ENCODE measurements at regions of chr11 and their contacts with region 1.

Region 1: GRCh38 chr11:85076373-85077330 is 550.5 kb downstream of the DLG2 start:
- DNase-seq: no peak
- H3K4me3 ChIP-seq: no peak overlapping the region
- H3K4me3 Mint-ChIP-seq: no peak overlapping the region
- H3K27ac Mint-ChIP-seq: no peak overlapping the region
- H3K4me1 ChIP-seq: peaks cover 8% of the 10 kb centered on the region; the same call in 1 of the 2 replicates
- H3K4me1 Mint-ChIP-seq: peaks cover 20% of the 10 kb centered on the region
- H3K27me3 ChIP-seq: no peaks in the 10 kb centered on the region
- H3K27me3 Mint-ChIP-seq: no peaks in the 10 kb centered on the region
- CTCF ChIP-seq: no peak

Region 2: GRCh38 chr11:85029911-85030332 is 46.7 kb before region 1 on chr11:
- CTCF ChIA-PET with region 1: no interaction called
- POLR2A ChIA-PET with region 1: no interaction called
- intact Hi-C with region 1: no loop called
- DNase-seq: no peak
- H3K4me3 ChIP-seq: no peak overlapping the region
- H3K4me3 Mint-ChIP-seq: no peak overlapping the region
- H3K27ac Mint-ChIP-seq: no peak overlapping the region
- H3K4me1 ChIP-seq: no peaks in the 10 kb centered on the region
- H3K4me1 Mint-ChIP-seq: no peaks in the 10 kb centered on the region
- H3K27me3 ChIP-seq: no peaks in the 10 kb centered on the region
- H3K27me3 Mint-ChIP-seq: no peaks in the 10 kb centered on the region
- CTCF ChIP-seq: no peak

Region 3: GRCh38 chr11:85098996-85099395 is 22.3 kb after region 1 on chr11:
- CTCF ChIA-PET with region 1: no interaction called
- POLR2A ChIA-PET with region 1: no interaction called
- intact Hi-C with region 1: no loop called
- DNase-seq: no peak
- H3K4me3 ChIP-seq: no peak overlapping the region
- H3K4me3 Mint-ChIP-seq: no peak overlapping the region
- H3K27ac Mint-ChIP-seq: no peak overlapping the region
- H3K4me1 ChIP-seq: 0 out of 2 replicates have a peak, but pooled peaks cover 7% of the 10 kb centered on the region
- H3K4me1 Mint-ChIP-seq: peaks cover 7% of the 10 kb centered on the region
- H3K27me3 ChIP-seq: no peaks in the 10 kb centered on the region
- H3K27me3 Mint-ChIP-seq: no peaks in the 10 kb centered on the region
- CTCF ChIP-seq: no peak

Region 4: DNA sequence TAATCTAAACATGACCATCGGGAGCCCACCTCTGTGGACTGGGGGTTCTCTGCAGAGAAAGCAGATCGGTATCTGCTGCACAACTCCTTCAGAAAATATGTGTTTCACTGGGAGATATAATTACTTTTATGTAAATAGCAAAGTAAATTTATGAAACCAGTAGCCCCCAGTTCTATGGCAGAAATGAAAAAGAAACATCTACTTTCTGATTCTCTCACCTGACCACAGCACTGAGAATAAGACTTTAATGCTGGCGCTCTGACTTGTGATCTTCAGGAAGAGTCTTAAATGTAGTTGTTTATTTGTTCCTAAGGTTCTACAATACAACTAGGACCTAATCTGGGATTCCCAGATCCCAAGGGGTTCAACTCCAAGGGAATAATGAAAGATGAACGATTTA is 32.5 kb after region 1 on chr11:
- CTCF ChIA-PET with region 1: no interaction called
- POLR2A ChIA-PET with region 1: no interaction called
- intact Hi-C with region 1: no loop called
- DNase-seq: no peak
- H3K4me3 ChIP-seq: no peak overlapping the region
- H3K4me3 Mint-ChIP-seq: no peak overlapping the region
- H3K27ac Mint-ChIP-seq: no peak overlapping the region
- H3K4me1 ChIP-seq: no peaks in the 10 kb centered on the region
- H3K4me1 Mint-ChIP-seq: no peaks in the 10 kb centered on the region
- H3K27me3 ChIP-seq: no peaks in the 10 kb centered on the region
- H3K27me3 Mint-ChIP-seq: no peaks in the 10 kb centered on the region
- CTCF ChIP-seq: no peak

Region 5: DNA sequence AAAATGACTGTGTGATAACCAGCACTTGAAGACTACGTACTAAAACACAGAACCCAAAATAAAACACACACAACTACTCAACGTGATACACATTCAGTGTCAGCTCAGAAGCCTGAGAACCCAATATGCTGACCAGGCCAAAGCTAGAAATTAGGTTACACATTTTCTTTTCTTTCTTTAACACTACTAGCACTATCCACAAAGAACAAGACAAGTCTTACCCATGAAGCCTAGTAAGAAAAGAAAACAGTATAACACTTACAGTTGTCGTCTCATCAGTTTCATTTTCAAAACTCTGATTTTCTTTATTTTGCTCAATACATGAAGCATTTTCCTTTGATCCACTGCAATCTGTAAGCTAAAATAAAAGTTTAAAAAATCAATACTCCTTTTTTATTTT is 77.6 kb after region 1 on chr11:
- CTCF ChIA-PET with region 1: no interaction called
- POLR2A ChIA-PET with region 1: no interaction called
- intact Hi-C with region 1: no loop called
- DNase-seq: no peak
- H3K4me3 ChIP-seq: no peak overlapping the region
- H3K4me3 Mint-ChIP-seq: no peak overlapping the region
- H3K27ac Mint-ChIP-seq: no peak overlapping the region
- H3K4me1 ChIP-seq: peaks cover 9% of the 10 kb centered on the region; the same call in 1 of the 2 replicates
- H3K4me1 Mint-ChIP-seq: peaks cover 6% of the 10 kb centered on the region
- H3K27me3 ChIP-seq: no peaks in the 10 kb centered on the region
- H3K27me3 Mint-ChIP-seq: no peaks in the 10 kb centered on the region
- CTCF ChIP-seq: no peak

Region 6: GRCh38 chr11:85249482-85249881 is 172.8 kb after region 1 on chr11:
- CTCF ChIA-PET with region 1: no interaction called
- POLR2A ChIA-PET with region 1: no interaction called
- intact Hi-C with region 1: loop called (anchors 5 kb)
- DNase-seq: no peak
- H3K4me3 ChIP-seq: no peak overlapping the region
- H3K4me3 Mint-ChIP-seq: no peak overlapping the region
- H3K27ac Mint-ChIP-seq: no peak overlapping the region
- H3K4me1 ChIP-seq: no peaks in the 10 kb centered on the region
- H3K4me1 Mint-ChIP-seq: no peaks in the 10 kb centered on the region
- H3K27me3 ChIP-seq: no peaks in the 10 kb centered on the region
- H3K27me3 Mint-ChIP-seq: no peaks in the 10 kb centered on the region
- CTCF ChIP-seq: no peak